Prostate gland (tissue), 2 donors: ENCODE measurements at regions of chr11 and their contacts with region 1.

Region 1: DNA sequence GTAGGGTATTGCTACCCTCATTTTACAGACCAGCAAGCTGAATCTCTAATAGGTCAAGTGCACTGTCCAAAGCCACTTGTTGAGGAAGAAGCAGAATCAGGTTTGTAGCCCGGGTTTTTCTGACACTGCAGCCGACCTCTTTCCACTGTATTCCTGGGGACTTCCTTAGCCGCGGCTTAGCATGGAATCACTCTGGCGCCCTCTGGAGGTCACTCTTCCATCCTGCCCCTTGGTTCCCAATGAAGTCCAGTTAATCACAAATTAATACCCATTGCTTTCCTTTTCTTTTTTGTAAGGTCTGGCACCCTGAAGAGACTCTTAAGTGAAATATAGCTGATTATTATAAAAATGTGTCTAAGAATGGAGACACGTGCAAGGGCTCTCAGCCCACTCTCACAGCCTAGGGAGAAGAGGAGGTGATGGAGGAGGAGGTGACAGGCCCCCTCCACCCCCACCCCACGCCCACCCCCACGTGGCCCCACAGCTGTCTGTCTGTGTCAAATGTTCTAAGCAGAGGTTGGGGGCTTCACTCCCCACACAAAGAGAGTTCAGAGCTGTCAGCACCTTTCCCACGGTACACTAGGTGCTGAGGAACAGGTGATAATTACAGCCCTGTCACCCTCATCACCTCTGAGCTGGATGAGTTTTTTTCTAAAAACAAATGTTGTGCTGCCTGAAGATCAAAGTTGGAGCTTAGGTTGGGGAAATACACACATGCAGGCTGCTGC is 57.7 kb upstream of the DRD2 start:
- DNase-seq: peak; percentile 77
- H3K4me3 ChIP-seq: no peak overlapping the region
- H3K27ac ChIP-seq: no peak overlapping the region
- H3K4me1 ChIP-seq: no peaks in the 10 kb centered on the region
- H3K27me3 ChIP-seq: no peaks in the 10 kb centered on the region
- CTCF ChIP-seq: peak; percentile 76 to 84 (median 78)
- POLR2A ChIP-seq: no peak

Region 2: DNA sequence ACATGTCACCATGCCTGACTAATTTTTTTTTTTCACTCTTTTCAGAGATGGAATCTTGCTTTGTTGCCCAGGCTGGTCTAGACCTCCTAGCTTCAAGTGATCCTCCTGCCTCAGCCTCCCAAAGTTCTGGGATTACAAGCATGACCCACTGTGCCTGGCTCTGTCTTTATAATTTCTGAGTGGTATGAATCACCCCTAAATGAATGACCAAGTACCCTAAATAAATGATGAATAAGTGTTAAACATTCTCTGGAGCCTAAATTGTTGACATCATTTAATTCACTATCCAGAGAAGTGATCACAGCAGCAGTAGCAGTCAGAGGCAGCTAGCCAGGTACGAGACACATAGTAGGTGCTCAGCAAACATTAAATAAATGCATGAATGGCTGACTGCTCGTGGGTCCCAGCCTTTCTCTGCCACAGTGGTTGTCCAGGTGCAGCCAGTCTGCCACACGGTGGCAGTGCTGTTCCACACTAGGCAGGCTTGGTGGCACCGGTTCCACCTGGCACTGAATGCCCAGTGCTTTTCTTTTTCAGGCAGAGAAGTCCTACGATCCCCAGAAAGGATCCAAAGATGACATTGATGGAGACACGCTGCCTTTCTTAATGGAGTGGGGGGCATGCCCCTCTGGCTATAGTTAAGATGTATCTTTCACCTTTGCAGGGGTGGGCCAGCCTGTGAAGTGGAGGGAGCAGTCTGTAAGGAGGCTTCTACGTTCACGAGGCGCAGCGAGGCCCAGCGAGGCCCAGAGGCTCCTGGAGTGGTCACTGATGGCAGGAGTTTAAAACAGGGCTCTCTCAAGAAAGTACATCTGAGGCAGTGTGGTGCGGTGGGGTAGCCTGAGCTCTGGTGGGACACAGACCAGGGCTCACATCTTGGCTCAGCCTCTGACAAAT is 227.2 kb before region 1 on chr11:
- intact Hi-C with region 1: loop called (anchors 2 kb)
- DNase-seq: peak; percentile 76
- H3K4me3 ChIP-seq: no peak overlapping the region
- H3K27ac ChIP-seq: no peak overlapping the region
- H3K4me1 ChIP-seq: no peaks in the 10 kb centered on the region
- H3K27me3 ChIP-seq: no peaks in the 10 kb centered on the region
- CTCF ChIP-seq: peak; percentile 68 to 94 (median 92)
- POLR2A ChIP-seq: no peak

Region 3: GRCh38 chr11:113376156-113376555 is 156.7 kb before region 1 on chr11:
- intact Hi-C with region 1: loop called (anchors 10 kb)
- DNase-seq: no peak
- H3K4me3 ChIP-seq: no peak overlapping the region
- H3K27ac ChIP-seq: no peak overlapping the region
- H3K4me1 ChIP-seq: no peaks in the 10 kb centered on the region
- H3K27me3 ChIP-seq: no peaks in the 10 kb centered on the region
- CTCF ChIP-seq: no peak
- POLR2A ChIP-seq: no peak

Region 4: DNA sequence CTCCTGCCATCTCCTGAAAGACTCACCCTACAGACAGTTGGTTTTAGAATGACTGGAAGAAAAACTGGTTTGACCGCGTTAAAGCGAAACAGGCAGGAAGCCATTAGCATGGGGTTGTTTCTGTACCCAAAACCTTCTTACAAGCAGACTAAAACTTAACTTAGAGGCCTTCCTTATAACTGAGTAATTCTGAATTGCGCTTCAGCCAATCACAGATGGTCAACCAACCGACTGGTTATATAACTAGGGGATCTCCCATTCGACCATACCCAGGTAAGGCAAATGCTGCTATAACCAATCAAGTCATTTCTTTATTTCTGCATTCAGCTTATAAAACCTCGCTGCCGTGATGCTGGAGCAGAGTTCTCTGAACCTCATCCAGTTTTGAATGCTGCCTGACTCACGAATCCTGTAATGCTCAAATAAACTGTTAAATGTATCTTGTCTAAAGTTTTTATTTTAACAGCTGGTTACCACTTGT is 30.2 kb after region 1 on chr11:
- intact Hi-C with region 1: no loop called
- DNase-seq: peak; percentile 16
- H3K4me3 ChIP-seq: no peak overlapping the region
- H3K27ac ChIP-seq: no peak overlapping the region
- H3K4me1 ChIP-seq: no peaks in the 10 kb centered on the region
- H3K27me3 ChIP-seq: no peaks in the 10 kb centered on the region
- CTCF ChIP-seq: no peak
- POLR2A ChIP-seq: no peak

Region 5: GRCh38 chr11:113730887-113731726 is 198.2 kb after region 1 on chr11:
- intact Hi-C with region 1: loop called (anchors 5 kb)
- DNase-seq: peak; percentile 45
- H3K4me3 ChIP-seq: no peak overlapping the region
- H3K27ac ChIP-seq: no peak overlapping the region
- H3K4me1 ChIP-seq: no peaks in the 10 kb centered on the region
- H3K27me3 ChIP-seq: no peaks in the 10 kb centered on the region
- CTCF ChIP-seq: peak; percentile 12 to 68 (median 56)
- POLR2A ChIP-seq: no peak